Panc1 (cell line): ENCODE measurements at regions of chr13 and their contacts with region 1.

Region 1: DNA sequence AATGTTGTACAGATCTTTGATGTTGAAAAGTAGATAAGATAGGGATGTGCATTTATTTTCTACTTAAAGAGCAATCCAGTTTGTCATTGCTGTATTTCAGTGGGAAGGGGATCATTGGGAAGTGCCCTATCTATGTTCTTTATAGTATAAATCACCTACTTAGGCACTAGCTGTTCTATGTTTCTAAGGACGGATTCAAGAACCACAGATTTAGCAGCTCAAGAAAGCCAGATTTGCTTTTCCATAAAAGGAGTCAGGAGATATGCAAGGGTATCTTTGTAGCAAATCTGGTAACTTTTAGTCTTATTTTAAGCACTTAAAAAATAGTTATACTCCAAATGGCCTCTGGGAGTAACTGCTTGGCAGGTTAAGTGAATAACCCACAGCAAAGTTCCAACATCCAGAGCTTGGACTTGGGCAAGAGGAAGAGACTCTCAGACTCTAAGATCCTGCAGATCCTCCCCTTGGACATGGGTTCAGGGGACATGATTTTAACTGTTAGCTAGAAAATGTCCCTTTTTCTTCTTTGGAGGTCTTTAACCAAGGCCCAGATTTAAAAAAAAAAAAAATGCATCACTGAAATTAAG is 23.6 kb downstream of the DCLK1 start:
- DNase-seq: no peak
- ATAC-seq: no peak
- H3K4me3 ChIP-seq: no peak overlapping the region
- H3K27ac ChIP-seq: no peak overlapping the region
- H3K4me1 ChIP-seq: no peaks in the 10 kb centered on the region
- H3K27me3 ChIP-seq: no peaks in the 10 kb centered on the region
- CTCF ChIP-seq: no peak

Region 2: DNA sequence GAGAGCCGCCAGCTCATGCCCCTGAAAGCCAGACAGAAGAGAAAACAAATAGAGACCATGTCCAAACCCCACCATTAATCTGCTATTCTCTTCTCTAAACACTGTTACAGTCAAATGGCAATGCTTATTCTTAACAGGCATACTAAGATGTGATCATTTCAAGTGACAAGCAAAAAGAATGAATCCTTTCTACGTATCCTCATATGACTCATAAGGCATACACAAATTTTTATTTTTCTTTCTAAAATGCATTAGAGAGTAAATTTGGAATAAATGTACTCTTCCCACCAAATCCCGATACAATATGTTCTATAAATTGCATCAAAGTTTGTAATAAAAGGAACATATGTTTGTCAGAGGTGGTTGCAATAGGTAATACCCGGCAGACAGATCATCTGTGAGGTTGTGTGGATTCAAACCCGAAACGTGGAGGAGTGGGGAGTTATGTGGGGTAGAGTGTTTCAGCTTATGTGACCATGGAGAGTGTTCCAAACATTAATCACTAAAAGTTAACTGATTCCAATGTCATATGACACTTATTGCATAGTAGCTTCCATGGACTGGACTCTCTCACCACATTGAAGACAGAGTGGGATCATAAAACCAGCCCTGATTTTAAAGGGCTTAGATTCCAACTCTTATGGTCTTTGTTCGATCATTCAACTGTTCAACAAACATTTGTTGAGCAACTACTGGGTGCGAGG is 189.5 kb before region 1 on chr13:
- CTCF ChIA-PET with region 1: interaction called, 10 read pairs
- POLR2A ChIA-PET with region 1: no interaction called
- in situ Hi-C with region 1: no loop called
- intact Hi-C with region 1: no loop called
- DNase-seq: no peak
- ATAC-seq: no peak
- H3K4me3 ChIP-seq: no peak overlapping the region
- H3K27ac ChIP-seq: no peak overlapping the region
- H3K4me1 ChIP-seq: no peaks in the 10 kb centered on the region
- H3K27me3 ChIP-seq: no peaks in the 10 kb centered on the region
- CTCF ChIP-seq: no peak

Region 3: GRCh38 chr13:36142735-36143134 is 35.1 kb after region 1 on chr13:
- CTCF ChIA-PET with region 1: no interaction called
- POLR2A ChIA-PET with region 1: no interaction called
- in situ Hi-C with region 1: no loop called
- intact Hi-C with region 1: no loop called
- DNase-seq: no peak
- ATAC-seq: no peak
- H3K4me3 ChIP-seq: no peak overlapping the region
- H3K27ac ChIP-seq: no peak overlapping the region
- H3K4me1 ChIP-seq: no peaks in the 10 kb centered on the region
- H3K27me3 ChIP-seq: no peaks in the 10 kb centered on the region
- CTCF ChIP-seq: no peak